ENCODE measurements at regions of chr11 and their contacts with region 1.

Region 1: GRCh38 chr11:34585735-34586487 is 35.0 kb upstream of the EHF start:
- DNase-seq: no peak
- H3K4me3 ChIP-seq: no peak overlapping the region
- H3K27ac ChIP-seq: no peak overlapping the region
- H3K4me1 ChIP-seq: peaks cover 0 to 6% (median 2%) of the 10 kb centered on the region in 4 experiments; a peak in 2 of 7 replicates
- H3K27me3 ChIP-seq: no peaks in the 10 kb centered on the region
- CTCF ChIP-seq: peak in 2 of 3 experiments; percentile 40 to 58; a peak in 2 of 4 replicates
- EP300 ChIP-seq: no peak
- POLR2A ChIP-seq: no peak
- RAD21 ChIP-seq: peak; percentile 76 to 81

Region 2: GRCh38 chr11:34357701-34358257 is 228.1 kb before region 1 on chr11 and contains the start of gene ABTB2:
- CTCF ChIA-PET with region 1: no interaction called
- POLR2A ChIA-PET with region 1: no interaction called
- DNase-seq: peak; percentile 96 to 98
- H3K4me3 ChIP-seq: peak within 1 kb of the TSS; percentile 52 to 87 (median 68)
- H3K27ac ChIP-seq: peak within 1 kb of the TSS; percentile 84; the same call in 1 of the 2 replicates
- H3K4me1 ChIP-seq: peaks cover 0 to 21% (median 8%) of the 10 kb centered on the region in 4 experiments; a peak in 5 of 7 replicates
- H3K27me3 ChIP-seq: peaks cover 5 to 31% (median 24%) of the 10 kb centered on the region in 4 experiments
- CTCF ChIP-seq: no peak
- EP300 ChIP-seq: no peak
- POLR2A ChIP-seq: peak; percentile 66 to 76
- RAD21 ChIP-seq: 0 out of 4 replicates have a peak, but pooled peaks of 1 of the 2 experiments have one; percentile 6
- total RNA-seq, gene ABTB2: 10.2 and 10.6 TPM in 2 replicates

Region 3: GRCh38 chr11:34600339-34601084 is 14.6 kb after region 1 on chr11:
- CTCF ChIA-PET with region 1: interaction called, 15 read pairs
- POLR2A ChIA-PET with region 1: no interaction called
- DNase-seq: no peak
- H3K4me3 ChIP-seq: no peak overlapping the region
- H3K27ac ChIP-seq: no peak overlapping the region
- H3K4me1 ChIP-seq: no peaks in the 10 kb centered on the region
- H3K27me3 ChIP-seq: no peaks in the 10 kb centered on the region
- CTCF ChIP-seq: no peak
- EP300 ChIP-seq: no peak
- POLR2A ChIP-seq: no peak
- RAD21 ChIP-seq: no peak

Region 4: DNA sequence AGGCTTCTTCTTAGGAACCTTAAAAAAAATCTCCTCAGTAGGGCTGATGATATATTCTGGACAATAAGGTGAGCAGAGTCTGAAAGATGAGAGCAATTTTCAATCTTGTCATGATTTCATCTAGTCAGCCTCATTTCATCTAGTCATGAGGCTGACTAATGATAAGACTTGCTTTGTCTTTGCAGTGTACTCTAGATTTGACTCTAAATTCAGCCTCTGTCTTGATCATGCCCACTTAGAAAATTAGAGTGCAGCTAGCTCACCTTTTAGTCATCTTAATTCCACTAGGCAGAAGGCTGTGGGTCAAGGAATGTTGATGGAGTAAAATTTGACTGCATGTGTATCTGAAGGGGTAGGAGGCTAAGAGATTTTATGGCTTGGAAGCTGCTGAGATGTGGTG is 40.5 kb after region 1 on chr11:
- CTCF ChIA-PET with region 1: no interaction called
- POLR2A ChIA-PET with region 1: no interaction called
- DNase-seq: no peak
- H3K4me3 ChIP-seq: no peak overlapping the region
- H3K27ac ChIP-seq: no peak overlapping the region
- H3K4me1 ChIP-seq: no peaks in the 10 kb centered on the region
- H3K27me3 ChIP-seq: no peaks in the 10 kb centered on the region
- CTCF ChIP-seq: no peak
- EP300 ChIP-seq: no peak
- POLR2A ChIP-seq: no peak
- RAD21 ChIP-seq: no peak

Region 5: DNA sequence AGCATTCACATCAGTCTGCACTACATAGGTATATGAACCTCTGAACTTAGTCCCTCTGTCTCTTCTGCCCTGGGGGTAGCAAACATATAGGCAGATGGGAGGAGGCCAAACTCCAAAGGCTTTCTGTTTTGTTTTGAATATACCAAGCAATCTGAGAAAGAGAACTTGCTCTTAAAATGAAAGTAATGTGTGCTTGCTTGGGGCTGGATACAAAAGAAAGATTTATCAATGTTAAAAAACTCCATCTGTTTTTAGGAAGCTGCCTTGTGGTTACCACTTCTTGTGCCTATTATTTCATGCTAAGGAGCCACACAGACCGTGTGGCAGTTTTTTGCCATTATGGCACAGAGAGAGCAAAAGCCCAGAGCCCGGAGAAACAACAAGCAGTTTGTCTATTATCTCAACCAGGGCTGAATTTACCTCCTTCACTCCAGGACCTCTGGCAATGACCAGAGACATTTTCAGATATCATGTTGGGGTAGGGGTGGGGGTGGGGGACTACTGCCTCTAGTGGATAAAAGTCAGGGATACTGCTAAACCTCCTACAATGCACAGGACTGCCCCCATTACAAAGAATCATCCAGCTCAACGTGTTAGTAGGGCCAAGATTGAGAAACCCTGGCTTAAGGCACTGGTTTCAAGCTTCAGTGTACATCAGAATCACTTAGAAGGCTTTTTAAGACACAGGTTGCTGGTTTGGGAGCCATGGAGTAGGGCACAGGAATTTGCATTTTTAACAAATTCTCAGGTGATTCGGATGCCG is 206.1 kb after region 1 on chr11:
- CTCF ChIA-PET with region 1: interaction called, 29 read pairs
- POLR2A ChIA-PET with region 1: no interaction called
- DNase-seq: no peak
- H3K4me3 ChIP-seq: no peak overlapping the region
- H3K27ac ChIP-seq: no peak overlapping the region
- H3K4me1 ChIP-seq: peaks cover 0 to 5% (median 3%) of the 10 kb centered on the region in 4 experiments; a peak in 2 of 7 replicates
- H3K27me3 ChIP-seq: no peaks in the 10 kb centered on the region
- CTCF ChIP-seq: peak in 2 of 3 experiments; percentile 4 to 21; a peak in 1 of 4 replicates
- EP300 ChIP-seq: no peak
- POLR2A ChIP-seq: no peak
- RAD21 ChIP-seq: peak in 1 of 2 experiments; percentile 1; a peak in 1 of 4 replicates

Region 6: GRCh38 chr11:34869426-34869825 is 283.5 kb after region 1 on chr11:
- CTCF ChIA-PET with region 1: interaction called, 14 read pairs
- POLR2A ChIA-PET with region 1: no interaction called
- DNase-seq: peak in 1 of 2 experiments; percentile 51
- H3K4me3 ChIP-seq: no peak overlapping the region
- H3K27ac ChIP-seq: no peak overlapping the region
- H3K4me1 ChIP-seq: no peaks in the 10 kb centered on the region
- H3K27me3 ChIP-seq: no peaks in the 10 kb centered on the region
- CTCF ChIP-seq: peak; percentile 35 to 73 (median 44)
- EP300 ChIP-seq: no peak
- POLR2A ChIP-seq: no peak
- RAD21 ChIP-seq: peak; percentile 35 to 50

Region 7: GRCh38 chr11:34899633-34900016 is 313.7 kb after region 1 on chr11:
- CTCF ChIA-PET with region 1: interaction called, 12 read pairs
- POLR2A ChIA-PET with region 1: no interaction called
- DNase-seq: no peak
- H3K4me3 ChIP-seq: no peak overlapping the region
- H3K27ac ChIP-seq: no peak overlapping the region
- H3K4me1 ChIP-seq: no peaks in the 10 kb centered on the region
- H3K27me3 ChIP-seq: no peaks in the 10 kb centered on the region
- CTCF ChIP-seq: no peak
- EP300 ChIP-seq: no peak
- POLR2A ChIP-seq: no peak
- RAD21 ChIP-seq: no peak

Measured in H1 (cell line).